CD4-positive, alpha-beta T cell (primary cell): ENCODE measurements at regions of chr7 and their contacts with region 1.

Region 1: DNA sequence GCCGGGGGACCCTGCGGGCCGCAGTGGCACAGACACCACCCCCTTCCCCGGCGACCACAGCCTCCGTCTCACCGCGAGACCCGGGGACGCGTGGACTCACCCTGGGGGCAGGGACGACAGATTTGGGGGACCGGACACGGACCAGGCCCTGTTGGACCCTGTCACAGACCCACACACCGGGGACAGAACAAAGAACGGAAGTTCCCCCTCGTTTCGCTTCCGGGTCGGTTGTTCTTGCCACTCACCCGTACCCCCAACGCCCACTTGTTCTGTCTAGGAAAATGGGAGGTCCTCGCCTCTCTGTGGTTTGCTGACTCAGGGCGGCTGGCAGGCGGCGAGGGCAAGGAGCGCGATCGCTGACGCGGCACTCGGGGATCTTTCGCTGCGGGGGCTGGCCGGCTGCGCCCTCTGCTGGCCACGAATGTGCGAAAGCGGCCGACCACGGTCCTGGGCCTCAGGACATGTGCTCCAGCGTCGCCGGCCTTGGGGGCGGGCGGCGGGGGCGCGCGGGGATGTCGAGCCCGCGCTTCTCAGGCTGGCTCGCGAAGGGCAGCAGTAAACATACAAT is at the start of gene ZNF3:
- DNase-seq: peak; percentile 92 to 99 (median 96)
- ATAC-seq: peak; percentile 85
- H3K4me3 ChIP-seq: peak within 1 kb of the TSS; percentile 84
- H3K4me3 Mint-ChIP-seq: peak within 1 kb of the TSS; percentile 90
- H3K27ac ChIP-seq: peak within 1 kb of the TSS; percentile 75 to 80
- H3K27ac Mint-ChIP-seq: peak within 1 kb of the TSS; percentile 83
- H3K4me1 ChIP-seq: peaks cover 36% of the 10 kb centered on the region
- H3K4me1 Mint-ChIP-seq: peaks cover 39% of the 10 kb centered on the region
- H3K27me3 ChIP-seq: no peaks in the 10 kb centered on the region
- H3K27me3 Mint-ChIP-seq: no peaks in the 10 kb centered on the region
- CTCF ChIP-seq: peak; percentile 96
- total RNA-seq, gene ZNF3: 38.3 to 40.3 TPM

Region 2: GRCh38 chr7:98841179-98841997 is 1240.2 kb before region 1 on chr7:
- CTCF ChIA-PET with region 1: no interaction called
- POLR2A ChIA-PET with region 1: no interaction called
- intact Hi-C with region 1: no loop called
- DNase-seq: peak; percentile 49 to 79 (median 67)
- ATAC-seq: peak; percentile 67
- H3K4me3 ChIP-seq: no peak overlapping the region
- H3K4me3 Mint-ChIP-seq: no peak overlapping the region
- H3K27ac ChIP-seq: no peak overlapping the region
- H3K27ac Mint-ChIP-seq: no peak overlapping the region
- H3K4me1 ChIP-seq: no peaks in the 10 kb centered on the region
- H3K4me1 Mint-ChIP-seq: no peaks in the 10 kb centered on the region
- H3K27me3 ChIP-seq: peaks cover 2 to 6% of the 10 kb centered on the region in 2 experiments
- H3K27me3 Mint-ChIP-seq: peaks cover 15% of the 10 kb centered on the region
- CTCF ChIP-seq: peak; percentile 90

Region 3: GRCh38 chr7:99143853-99144672 is 937.6 kb before region 1 on chr7 and contains the start of gene SMURF1:
- CTCF ChIA-PET with region 1: no interaction called
- POLR2A ChIA-PET with region 1: no interaction called
- intact Hi-C with region 1: loop called in 1 of 2 experiments (anchors 10 kb)
- DNase-seq: peak; percentile 52 to 93 (median 70)
- ATAC-seq: peak; percentile 42
- H3K4me3 ChIP-seq: peak within 1 kb of the TSS; percentile 88
- H3K4me3 Mint-ChIP-seq: peak within 1 kb of the TSS; percentile 96
- H3K27ac ChIP-seq: peak within 1 kb of the TSS; percentile 64 to 71
- H3K27ac Mint-ChIP-seq: peak within 1 kb of the TSS; percentile 96
- H3K4me1 ChIP-seq: peaks cover 28% of the 10 kb centered on the region
- H3K4me1 Mint-ChIP-seq: peaks cover 40% of the 10 kb centered on the region
- H3K27me3 ChIP-seq: no peaks in the 10 kb centered on the region
- H3K27me3 Mint-ChIP-seq: no peaks in the 10 kb centered on the region
- CTCF ChIP-seq: no peak
- total RNA-seq, gene SMURF1: 30.0 to 32.4 TPM

Region 4: DNA sequence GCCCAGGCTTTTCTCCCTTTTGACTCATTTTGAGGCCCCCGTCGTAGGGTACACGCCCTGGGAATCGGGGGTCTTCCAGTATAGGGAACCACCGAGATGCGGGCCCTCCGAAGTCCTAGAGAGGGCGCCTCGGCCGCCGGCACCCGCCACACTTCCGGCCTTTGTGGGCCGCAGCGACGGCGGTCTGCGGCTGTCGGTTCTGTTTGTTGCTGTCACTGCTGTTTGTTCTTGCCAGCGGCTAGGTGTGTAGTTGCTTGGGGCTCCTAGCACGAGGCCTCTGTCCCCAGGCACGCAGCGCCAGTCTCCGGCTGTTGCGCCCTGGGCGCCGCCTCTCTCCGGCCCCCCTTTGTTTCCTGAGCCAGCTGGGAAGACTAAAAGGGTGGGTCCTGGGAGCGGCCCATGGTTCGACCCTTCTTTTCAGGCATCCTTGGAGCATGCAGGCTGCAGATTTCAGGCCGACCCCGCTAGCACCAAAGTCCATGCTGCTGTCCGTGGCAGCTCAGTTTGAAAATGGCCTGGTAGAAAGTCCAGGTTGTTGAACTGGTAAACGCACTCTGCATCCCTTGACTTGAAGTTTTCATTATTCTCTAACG is 84.0 kb before region 1 on chr7:
- CTCF ChIA-PET with region 1: no interaction called
- POLR2A ChIA-PET with region 1: interaction called, 6 read pairs
- intact Hi-C with region 1: loop called (anchors 1 kb)
- DNase-seq: peak; percentile 49 to 89 (median 68)
- ATAC-seq: peak; percentile 91
- H3K4me3 ChIP-seq: peak overlapping the region; percentile 48
- H3K4me3 Mint-ChIP-seq: peak overlapping the region; percentile 82
- H3K27ac ChIP-seq: peak overlapping the region; percentile 42 to 66
- H3K27ac Mint-ChIP-seq: peak overlapping the region; percentile 90
- H3K4me1 ChIP-seq: peaks cover 21% of the 10 kb centered on the region
- H3K4me1 Mint-ChIP-seq: peaks cover 22% of the 10 kb centered on the region
- H3K27me3 ChIP-seq: no peaks in the 10 kb centered on the region
- H3K27me3 Mint-ChIP-seq: no peaks in the 10 kb centered on the region
- CTCF ChIP-seq: no peak

Region 5: DNA sequence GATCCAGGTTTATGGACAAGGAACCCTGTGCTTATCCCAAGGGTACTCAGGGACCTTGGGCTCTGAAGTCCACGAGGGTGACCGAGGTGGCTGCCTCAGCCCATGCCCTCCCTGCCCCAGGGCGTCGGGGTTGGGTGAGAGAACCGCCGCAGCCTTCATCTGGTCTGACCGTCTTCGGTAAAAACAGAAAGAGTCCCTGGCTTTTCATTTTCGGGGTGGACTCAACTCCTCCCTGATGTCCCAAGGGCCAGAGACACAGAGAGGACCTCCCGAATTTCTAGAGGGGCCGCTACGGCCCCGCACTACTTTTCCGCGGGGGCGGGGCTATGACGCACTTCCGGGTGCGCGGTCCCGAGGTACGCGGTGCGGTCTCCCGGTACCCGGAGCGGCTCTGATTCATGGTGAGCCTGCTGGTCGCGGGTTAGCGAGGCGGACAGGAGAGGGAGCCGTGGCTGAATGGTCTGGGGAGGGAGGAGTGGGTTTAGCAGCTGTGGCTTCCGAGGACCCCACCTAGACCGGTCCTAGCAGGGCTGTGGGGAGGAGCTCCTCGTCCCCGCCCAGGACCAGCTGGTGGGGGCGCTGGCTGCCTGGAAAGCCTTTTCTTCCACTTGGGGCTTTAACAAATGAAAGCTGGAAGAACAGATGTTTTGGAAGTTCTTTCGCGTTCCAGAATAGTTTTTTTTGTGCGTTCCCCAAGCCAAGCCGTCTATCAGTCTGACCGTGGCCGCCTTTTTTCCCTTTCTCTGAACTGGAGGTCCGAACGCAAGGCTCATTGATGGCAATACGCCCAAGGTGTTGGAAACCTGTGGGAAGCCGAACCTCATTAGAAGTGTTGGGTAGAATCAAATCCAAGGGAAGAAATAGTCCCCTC is 31.9 kb before region 1 on chr7 and contains the start of gene ZSCAN21:
- CTCF ChIA-PET with region 1: no interaction called
- POLR2A ChIA-PET with region 1: interaction called, 6 read pairs
- intact Hi-C with region 1: loop called (anchors 2 to 5 kb)
- DNase-seq: peak; percentile 59 to 89 (median 74)
- ATAC-seq: peak; percentile 88
- H3K4me3 ChIP-seq: peak within 1 kb of the TSS; percentile 97
- H3K4me3 Mint-ChIP-seq: peak within 1 kb of the TSS; percentile 95
- H3K27ac ChIP-seq: peak within 1 kb of the TSS; percentile 77 to 88
- H3K27ac Mint-ChIP-seq: peak within 1 kb of the TSS; percentile 96
- H3K4me1 ChIP-seq: peaks cover 18% of the 10 kb centered on the region
- H3K4me1 Mint-ChIP-seq: peaks cover 25% of the 10 kb centered on the region
- H3K27me3 ChIP-seq: no peaks in the 10 kb centered on the region
- H3K27me3 Mint-ChIP-seq: no peaks in the 10 kb centered on the region
- CTCF ChIP-seq: peak; percentile 20
- total RNA-seq, gene ZSCAN21: 2.0 to 2.7 TPM

Region 6: GRCh38 chr7:100065452-100066186 is 16.0 kb before region 1 on chr7:
- CTCF ChIA-PET with region 1: no interaction called
- POLR2A ChIA-PET with region 1: no interaction called
- intact Hi-C with region 1: no loop called
- DNase-seq: no peak
- ATAC-seq: no peak
- H3K4me3 ChIP-seq: no peak overlapping the region
- H3K4me3 Mint-ChIP-seq: no peak overlapping the region
- H3K27ac ChIP-seq: no peak overlapping the region
- H3K27ac Mint-ChIP-seq: no peak overlapping the region
- H3K4me1 ChIP-seq: no peaks in the 10 kb centered on the region
- H3K4me1 Mint-ChIP-seq: no peaks in the 10 kb centered on the region
- H3K27me3 ChIP-seq: no peaks in the 10 kb centered on the region
- H3K27me3 Mint-ChIP-seq: no peaks in the 10 kb centered on the region
- CTCF ChIP-seq: no peak

Region 7: GRCh38 chr7:100119062-100119700 is 37.6 kb after region 1 on chr7 and contains the starts of genes CNPY4 and TAF6:
- CTCF ChIA-PET with region 1: interaction called, 6 read pairs
- POLR2A ChIA-PET with region 1: interaction called, 6 read pairs
- intact Hi-C with region 1: loop called in 1 of 2 experiments (anchors 2 kb)
- DNase-seq: peak; percentile 90 to 98 (median 96)
- ATAC-seq: peak; percentile 70
- H3K4me3 ChIP-seq: peak within 1 kb of the TSS; percentile 93
- H3K4me3 Mint-ChIP-seq: peak within 1 kb of the TSS; percentile 98
- H3K27ac ChIP-seq: peak within 1 kb of the TSS; percentile 79 to 98
- H3K27ac Mint-ChIP-seq: peak within 1 kb of the TSS; percentile 97
- H3K4me1 ChIP-seq: peaks cover 31% of the 10 kb centered on the region
- H3K4me1 Mint-ChIP-seq: peaks cover 24% of the 10 kb centered on the region
- H3K27me3 ChIP-seq: no peaks in the 10 kb centered on the region
- H3K27me3 Mint-ChIP-seq: no peaks in the 10 kb centered on the region
- CTCF ChIP-seq: no peak
- total RNA-seq, gene CNPY4: 22.5 to 25.6 TPM
- total RNA-seq, gene TAF6: 34.8 to 37.4 TPM

Region 8: GRCh38 chr7:100190048-100190711 is 108.6 kb after region 1 on chr7:
- CTCF ChIA-PET with region 1: no interaction called
- POLR2A ChIA-PET with region 1: no interaction called
- intact Hi-C with region 1: no loop called
- DNase-seq: peak in 3 of 14 experiments; percentile 72 to 77 (median 73)
- ATAC-seq: peak; percentile 84
- H3K4me3 ChIP-seq: no peak overlapping the region
- H3K4me3 Mint-ChIP-seq: no peak overlapping the region
- H3K27ac ChIP-seq: no peak overlapping the region
- H3K27ac Mint-ChIP-seq: peak overlapping the region; percentile 25
- H3K4me1 ChIP-seq: peaks cover 1% of the 10 kb centered on the region
- H3K4me1 Mint-ChIP-seq: peaks cover 44% of the 10 kb centered on the region
- H3K27me3 ChIP-seq: no peaks in the 10 kb centered on the region
- H3K27me3 Mint-ChIP-seq: no peaks in the 10 kb centered on the region
- CTCF ChIP-seq: peak; percentile 55

Region 9: DNA sequence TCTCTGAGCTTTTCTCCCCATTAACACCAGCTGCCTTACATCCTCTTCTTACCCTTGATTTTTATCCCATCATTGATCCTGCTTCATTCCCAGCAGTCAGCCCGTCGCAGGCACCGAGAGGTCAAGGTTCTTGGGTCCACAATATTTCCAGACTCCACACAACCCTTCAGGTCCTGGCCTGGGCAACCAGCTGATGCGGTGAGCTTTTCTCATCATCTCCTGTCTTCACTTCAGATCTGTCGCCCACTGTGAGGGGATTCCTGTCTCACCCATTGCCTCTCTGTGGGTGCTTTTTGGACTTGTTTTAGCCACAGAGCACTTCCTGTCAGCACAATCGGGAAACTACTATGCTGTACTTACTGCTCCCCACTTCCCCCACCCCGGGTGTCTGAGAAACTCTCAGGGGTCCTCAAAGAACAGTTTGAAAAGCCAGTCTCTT is 129.7 kb after region 1 on chr7:
- CTCF ChIA-PET with region 1: no interaction called
- POLR2A ChIA-PET with region 1: no interaction called
- intact Hi-C with region 1: no loop called
- DNase-seq: peak in 5 of 14 experiments; percentile 31 to 79 (median 68)
- ATAC-seq: peak; percentile 80
- H3K4me3 ChIP-seq: no peak overlapping the region
- H3K4me3 Mint-ChIP-seq: peak overlapping the region; percentile 36
- H3K27ac ChIP-seq: peak overlapping the region in 1 of 2 donors; percentile 14
- H3K27ac Mint-ChIP-seq: peak overlapping the region; percentile 82
- H3K4me1 ChIP-seq: peaks cover 45% of the 10 kb centered on the region
- H3K4me1 Mint-ChIP-seq: peaks cover 57% of the 10 kb centered on the region
- H3K27me3 ChIP-seq: no peaks in the 10 kb centered on the region
- H3K27me3 Mint-ChIP-seq: no peaks in the 10 kb centered on the region
- CTCF ChIP-seq: no peak

Region 10: DNA sequence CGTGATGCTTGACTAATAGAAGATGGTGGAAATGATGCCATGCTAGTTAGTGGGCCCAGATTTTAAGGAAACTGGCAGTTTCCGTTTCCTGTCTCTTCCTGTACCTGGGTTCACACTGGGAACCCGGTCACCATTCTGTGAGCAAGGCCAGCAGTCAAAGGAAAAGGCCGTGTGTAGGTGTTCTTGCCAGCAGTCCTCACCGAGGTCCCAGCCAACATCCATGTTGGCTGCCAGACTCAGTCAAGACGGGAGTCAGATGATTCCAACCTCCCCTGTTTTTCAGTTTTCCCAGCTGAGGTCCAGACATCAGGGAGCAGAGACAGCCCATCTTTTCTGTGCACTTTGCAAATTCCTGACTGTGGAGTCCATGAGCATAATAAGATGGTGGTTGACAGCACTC is 261.1 kb after region 1 on chr7:
- CTCF ChIA-PET with region 1: no interaction called
- POLR2A ChIA-PET with region 1: no interaction called
- intact Hi-C with region 1: loop called in 1 of 2 experiments (anchors 5 kb)
- DNase-seq: peak in 1 of 14 experiments; percentile 9
- ATAC-seq: no peak
- H3K4me3 ChIP-seq: no peak overlapping the region
- H3K4me3 Mint-ChIP-seq: no peak overlapping the region
- H3K27ac ChIP-seq: no peak overlapping the region
- H3K27ac Mint-ChIP-seq: peak overlapping the region; percentile 78
- H3K4me1 ChIP-seq: peaks cover 18% of the 10 kb centered on the region
- H3K4me1 Mint-ChIP-seq: peaks cover 33% of the 10 kb centered on the region
- H3K27me3 ChIP-seq: no peaks in the 10 kb centered on the region
- H3K27me3 Mint-ChIP-seq: no peaks in the 10 kb centered on the region
- CTCF ChIP-seq: no peak